Activated CD4-positive, alpha-beta T cell treated with anti-CD3 and anti-CD28 coated beads, Interleukin-2, amount 10 ng/mL, durations not matched to agents 24 days and 14 days (primary cell): ENCODE measurements at regions of chr3 and their contacts with region 1.

Region 1: GRCh38 chr3:43621656-43622432 is at the start of gene ANO10:
- DNase-seq: peak; percentile 98
- H3K4me3 Mint-ChIP-seq: peak within 1 kb of the TSS; percentile 95
- H3K27ac Mint-ChIP-seq: peak within 1 kb of the TSS; percentile 89
- H3K4me1 Mint-ChIP-seq: peaks cover 21% of the 10 kb centered on the region
- H3K27me3 Mint-ChIP-seq: peaks cover 16% of the 10 kb centered on the region
- total RNA-seq, gene ANO10: 3.5 and 6.0 TPM in 2 replicates

Region 2: GRCh38 chr3:43389388-43390254 is 232.2 kb before region 1 on chr3:
- intact Hi-C with region 1: loop called (anchors 5 kb)
- DNase-seq: peak; percentile 93
- H3K4me3 Mint-ChIP-seq: peak overlapping the region; percentile 69
- H3K27ac Mint-ChIP-seq: peak overlapping the region; percentile 88
- H3K4me1 Mint-ChIP-seq: peaks cover 47% of the 10 kb centered on the region
- H3K27me3 Mint-ChIP-seq: peaks cover under 1% of the 10 kb centered on the region